ENCODE measurements at regions of chr7 and their contacts with region 1.

Region 1: DNA sequence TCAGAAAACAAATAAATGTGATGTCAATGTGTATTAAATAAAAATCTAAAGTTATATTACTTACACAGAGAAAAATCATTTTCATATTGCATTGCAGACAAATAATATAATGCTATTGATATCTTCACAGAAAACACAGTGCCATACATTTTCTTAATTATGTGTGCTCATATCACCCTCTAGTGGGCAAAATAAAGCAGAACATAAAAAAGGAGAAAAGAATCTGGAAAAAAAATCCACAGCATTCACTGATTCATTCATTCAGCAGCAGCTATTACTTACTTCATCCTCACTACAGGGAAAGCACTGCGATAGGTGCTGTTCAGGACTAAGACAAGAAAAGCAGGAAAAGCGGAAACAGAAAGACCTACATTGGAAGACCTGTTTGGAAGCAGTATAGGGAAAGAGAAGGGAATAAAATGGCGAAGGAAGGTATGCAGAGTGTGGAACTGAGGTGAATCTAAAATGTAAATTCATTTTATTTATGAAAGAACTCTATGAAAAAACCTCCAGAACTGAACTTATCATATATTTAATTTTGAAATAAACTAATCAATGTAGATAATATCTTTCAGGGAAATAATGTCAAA is 73.2 kb downstream of the POT1 start:
- DNase-seq: peak; percentile 37
- H3K4me3 ChIP-seq: no peak overlapping the region; a peak in 1 of 4 replicates
- H3K27ac ChIP-seq: peak overlapping the region in 1 of 2 experiments; percentile 51; a peak in 2 of 4 replicates
- H3K4me1 ChIP-seq: peaks cover 0 to 7% of the 10 kb centered on the region in 2 experiments; a peak in 1 of 4 replicates
- H3K27me3 ChIP-seq: no peaks in the 10 kb centered on the region
- CTCF ChIP-seq: peak; percentile 94
- EP300 ChIP-seq: no peak
- RAD21 ChIP-seq: peak; percentile 77

Region 2: DNA sequence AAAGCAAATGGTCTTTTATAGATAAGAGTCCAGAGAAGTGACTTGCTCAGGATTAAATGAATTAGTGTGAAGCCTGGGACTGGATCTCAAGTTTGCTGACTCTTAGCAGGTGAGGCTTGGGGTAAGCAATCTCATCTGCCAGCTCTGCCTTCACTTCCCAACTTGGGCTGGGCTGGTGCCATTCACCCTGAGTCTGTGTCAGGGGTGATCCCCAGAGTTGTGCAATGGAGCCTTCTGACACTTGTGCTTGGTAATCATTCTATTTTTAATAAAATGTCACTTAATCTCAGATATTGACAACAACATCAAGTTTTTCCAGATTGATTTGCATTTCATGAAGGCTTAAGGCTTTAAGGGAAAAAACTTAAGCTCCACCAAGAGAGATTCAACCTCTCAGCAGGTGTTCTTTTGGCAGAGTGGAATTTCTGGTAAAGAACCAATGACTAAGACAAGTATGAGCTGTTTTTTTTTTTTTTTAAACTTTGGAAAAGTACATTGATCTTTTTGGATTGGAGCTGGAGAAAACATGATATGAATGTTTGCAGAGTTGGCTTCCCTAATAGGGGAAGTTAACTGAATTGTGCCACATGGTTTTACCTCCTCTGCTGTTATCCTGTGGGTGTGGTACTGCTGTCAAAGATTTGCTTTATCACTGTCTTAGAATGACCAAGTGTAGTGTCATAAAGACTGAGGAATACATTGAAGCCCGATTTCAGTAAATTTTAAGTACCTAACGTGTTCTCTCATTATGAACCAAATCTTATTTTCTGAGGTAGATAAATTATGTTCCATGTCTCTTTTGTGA is 42.2 kb before region 1 on chr7:
- CTCF ChIA-PET with region 1: no interaction called
- POLR2A ChIA-PET with region 1: no interaction called
- DNase-seq: no peak
- H3K4me3 ChIP-seq: no peak overlapping the region
- H3K27ac ChIP-seq: no peak overlapping the region
- H3K4me1 ChIP-seq: no peaks in the 10 kb centered on the region
- H3K27me3 ChIP-seq: no peaks in the 10 kb centered on the region
- CTCF ChIP-seq: no peak
- EP300 ChIP-seq: no peak
- RAD21 ChIP-seq: no peak

Region 3: DNA sequence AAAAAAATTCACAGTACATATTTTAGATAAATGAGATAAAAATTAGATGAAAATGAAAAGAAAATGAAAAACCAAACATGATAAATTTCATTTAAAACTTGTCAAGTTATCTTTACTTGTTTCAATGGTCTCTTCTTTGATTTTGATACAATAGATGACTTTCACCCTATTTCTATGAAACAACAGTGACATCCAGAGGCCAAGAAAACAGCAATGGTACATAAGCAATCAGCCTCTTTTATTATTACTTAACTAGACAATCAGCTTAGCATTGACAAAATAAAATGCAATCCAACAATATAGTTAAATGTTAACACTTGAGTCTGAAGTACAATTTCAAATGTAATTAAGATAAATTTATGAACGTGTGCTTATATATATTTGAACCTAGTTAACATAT is 16.0 kb before region 1 on chr7:
- CTCF ChIA-PET with region 1: interaction called, 18 read pairs
- POLR2A ChIA-PET with region 1: no interaction called
- DNase-seq: peak; percentile 25
- H3K4me3 ChIP-seq: no peak overlapping the region
- H3K27ac ChIP-seq: no peak overlapping the region
- H3K4me1 ChIP-seq: no peaks in the 10 kb centered on the region
- H3K27me3 ChIP-seq: no peaks in the 10 kb centered on the region
- CTCF ChIP-seq: peak; percentile 43
- EP300 ChIP-seq: no peak
- RAD21 ChIP-seq: peak; percentile 66

Measured in SK-N-SH (cell line).